ENCODE measurements at regions of chr1 and their contacts with region 1.

Region 1: DNA sequence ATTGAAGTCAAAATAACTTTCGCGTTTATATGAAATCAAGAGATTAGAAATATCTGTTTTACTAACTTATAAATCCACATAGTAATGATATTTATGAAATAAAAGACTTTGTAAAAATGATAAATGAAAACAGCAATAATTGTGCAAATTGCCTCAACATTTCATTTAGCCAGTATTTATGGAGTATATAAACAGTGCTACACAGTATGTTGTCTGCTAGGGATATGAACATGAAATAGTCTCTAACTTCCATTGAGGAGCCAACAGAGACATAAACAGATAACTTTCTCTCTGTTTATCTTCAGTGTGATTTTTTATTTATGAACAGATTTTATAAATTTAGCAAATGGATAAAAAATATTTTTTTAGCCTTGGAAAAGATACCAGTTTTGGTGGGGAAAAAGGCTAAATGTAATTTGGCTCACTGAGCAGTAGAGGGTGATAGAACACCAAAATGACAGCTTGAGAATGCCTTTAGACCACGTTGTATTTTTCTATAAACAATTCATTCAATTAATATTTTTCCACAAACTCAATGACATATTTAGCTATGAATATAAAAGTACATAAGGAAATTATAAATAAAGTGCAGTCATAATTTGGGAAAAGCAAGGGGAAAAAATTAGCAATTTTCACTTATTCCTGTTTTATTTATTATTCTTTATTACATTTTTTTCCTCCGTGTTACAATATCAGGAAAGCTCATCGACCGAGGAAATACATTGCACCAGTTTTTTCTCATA is 47.5 kb upstream of the EEIG2 start:
- DNase-seq: peak; percentile 41
- H3K4me3 ChIP-seq: peak overlapping the region in 1 of 2 experiments; percentile 37; a peak in 1 of 4 replicates
- H3K27ac ChIP-seq: no peak overlapping the region
- H3K4me1 ChIP-seq: no peaks in the 10 kb centered on the region; a peak in 1 of 4 replicates
- H3K27me3 ChIP-seq: no peaks in the 10 kb centered on the region
- CTCF ChIP-seq: peak; percentile 96
- EP300 ChIP-seq: no peak
- RAD21 ChIP-seq: peak; percentile 96

Region 2: GRCh38 chr1:108600504-108600903 is 88.1 kb after region 1 on chr1:
- CTCF ChIA-PET with region 1: no interaction called
- POLR2A ChIA-PET with region 1: no interaction called
- DNase-seq: no peak
- H3K4me3 ChIP-seq: no peak overlapping the region
- H3K27ac ChIP-seq: peak overlapping the region in 1 of 2 experiments; percentile 69; a peak in 2 of 4 replicates
- H3K4me1 ChIP-seq: peaks cover 13 to 29% of the 10 kb centered on the region in 2 experiments; a peak in 3 of 4 replicates
- H3K27me3 ChIP-seq: no peaks in the 10 kb centered on the region
- CTCF ChIP-seq: no peak
- EP300 ChIP-seq: no peak
- RAD21 ChIP-seq: no peak

Region 3: DNA sequence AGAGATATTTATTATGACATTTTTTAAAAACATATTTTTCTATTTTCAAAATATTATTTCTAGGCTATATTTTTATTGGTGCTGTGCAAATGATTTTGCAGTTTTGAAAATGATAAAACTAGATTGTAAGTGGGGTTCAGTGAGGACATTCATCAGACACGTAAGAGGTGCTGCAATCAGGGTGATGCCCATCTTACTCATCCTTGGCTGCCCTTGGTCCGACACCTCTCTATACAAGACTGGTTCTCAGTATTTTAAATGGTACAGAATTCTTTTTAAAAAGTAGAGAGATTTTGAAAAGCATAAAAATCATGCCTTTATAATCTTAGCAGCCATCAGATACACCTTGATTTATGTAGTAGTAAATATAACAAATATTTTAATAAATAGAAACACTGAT is 124.5 kb after region 1 on chr1:
- CTCF ChIA-PET with region 1: interaction called, 16 read pairs
- POLR2A ChIA-PET with region 1: no interaction called
- DNase-seq: no peak
- H3K4me3 ChIP-seq: no peak overlapping the region
- H3K27ac ChIP-seq: no peak overlapping the region
- H3K4me1 ChIP-seq: no peaks in the 10 kb centered on the region
- H3K27me3 ChIP-seq: no peaks in the 10 kb centered on the region
- CTCF ChIP-seq: no peak
- EP300 ChIP-seq: no peak
- RAD21 ChIP-seq: no peak

Region 4: GRCh38 chr1:108803548-108803947 is 291.1 kb after region 1 on chr1:
- CTCF ChIA-PET with region 1: no interaction called
- POLR2A ChIA-PET with region 1: no interaction called
- DNase-seq: no peak
- H3K4me3 ChIP-seq: no peak overlapping the region
- H3K27ac ChIP-seq: no peak overlapping the region
- H3K4me1 ChIP-seq: no peaks in the 10 kb centered on the region; a peak in 1 of 4 replicates
- H3K27me3 ChIP-seq: no peaks in the 10 kb centered on the region
- CTCF ChIP-seq: no peak
- EP300 ChIP-seq: no peak
- RAD21 ChIP-seq: no peak

Region 5: GRCh38 chr1:108817811-108818210 is 305.4 kb after region 1 on chr1:
- CTCF ChIA-PET with region 1: no interaction called
- POLR2A ChIA-PET with region 1: no interaction called
- DNase-seq: no peak
- H3K4me3 ChIP-seq: no peak overlapping the region
- H3K27ac ChIP-seq: peak overlapping the region in 1 of 2 experiments; percentile 11; a peak in 1 of 4 replicates
- H3K4me1 ChIP-seq: peaks cover 20 to 30% of the 10 kb centered on the region in 2 experiments
- H3K27me3 ChIP-seq: no peaks in the 10 kb centered on the region
- CTCF ChIP-seq: no peak
- EP300 ChIP-seq: no peak
- RAD21 ChIP-seq: peak; percentile 24; the same call in 1 of the 2 replicates

Measured in SK-N-SH (cell line).